Caco-2 (cell line): ENCODE measurements at regions of chr12 and their contacts with region 1.

Region 1: GRCh38 chr12:121748571-121749253 is 36.2 kb downstream of the TMEM120B start:
- DNase-seq: peak; percentile 83 to 92
- H3K4me3 ChIP-seq: no peak overlapping the region
- H3K4me3 Mint-ChIP-seq: peak overlapping the region; percentile 65
- H3K27ac Mint-ChIP-seq: peak overlapping the region; percentile 95
- H3K4me1 ChIP-seq: peaks cover 15% of the 10 kb centered on the region
- H3K4me1 Mint-ChIP-seq: peaks cover 10% of the 10 kb centered on the region
- H3K27me3 ChIP-seq: no peaks in the 10 kb centered on the region
- H3K27me3 Mint-ChIP-seq: no peaks in the 10 kb centered on the region
- CTCF ChIP-seq: no peak

Region 2: DNA sequence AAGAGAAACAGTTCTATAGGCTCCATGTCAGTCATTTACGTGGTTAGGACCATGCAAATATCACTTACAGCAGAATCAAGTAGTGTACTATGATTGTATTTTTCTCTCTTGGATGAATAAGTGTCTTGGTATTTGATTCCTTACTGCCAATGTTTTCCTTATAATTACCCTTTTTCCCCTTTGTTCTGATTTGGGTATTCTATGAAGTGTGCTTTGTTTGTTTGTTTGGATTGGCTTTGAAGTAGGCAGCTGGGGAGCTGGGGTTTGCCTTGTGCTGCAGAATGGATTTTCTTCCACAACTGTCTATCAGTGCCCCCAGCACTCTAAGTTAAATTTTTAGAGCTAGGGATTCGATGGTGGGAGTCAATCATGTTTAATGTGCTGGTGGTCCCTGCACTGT is 23.8 kb before region 1 on chr12:
- CTCF ChIA-PET with region 1: interaction called, 3 read pairs
- POLR2A ChIA-PET with region 1: no interaction called
- intact Hi-C with region 1: loop called (anchors 1 kb)
- DNase-seq: no peak
- H3K4me3 ChIP-seq: no peak overlapping the region
- H3K4me3 Mint-ChIP-seq: no peak overlapping the region
- H3K27ac Mint-ChIP-seq: no peak overlapping the region
- H3K4me1 ChIP-seq: no peaks in the 10 kb centered on the region
- H3K4me1 Mint-ChIP-seq: no peaks in the 10 kb centered on the region
- H3K27me3 ChIP-seq: no peaks in the 10 kb centered on the region
- H3K27me3 Mint-ChIP-seq: no peaks in the 10 kb centered on the region
- CTCF ChIP-seq: no peak

Region 3: DNA sequence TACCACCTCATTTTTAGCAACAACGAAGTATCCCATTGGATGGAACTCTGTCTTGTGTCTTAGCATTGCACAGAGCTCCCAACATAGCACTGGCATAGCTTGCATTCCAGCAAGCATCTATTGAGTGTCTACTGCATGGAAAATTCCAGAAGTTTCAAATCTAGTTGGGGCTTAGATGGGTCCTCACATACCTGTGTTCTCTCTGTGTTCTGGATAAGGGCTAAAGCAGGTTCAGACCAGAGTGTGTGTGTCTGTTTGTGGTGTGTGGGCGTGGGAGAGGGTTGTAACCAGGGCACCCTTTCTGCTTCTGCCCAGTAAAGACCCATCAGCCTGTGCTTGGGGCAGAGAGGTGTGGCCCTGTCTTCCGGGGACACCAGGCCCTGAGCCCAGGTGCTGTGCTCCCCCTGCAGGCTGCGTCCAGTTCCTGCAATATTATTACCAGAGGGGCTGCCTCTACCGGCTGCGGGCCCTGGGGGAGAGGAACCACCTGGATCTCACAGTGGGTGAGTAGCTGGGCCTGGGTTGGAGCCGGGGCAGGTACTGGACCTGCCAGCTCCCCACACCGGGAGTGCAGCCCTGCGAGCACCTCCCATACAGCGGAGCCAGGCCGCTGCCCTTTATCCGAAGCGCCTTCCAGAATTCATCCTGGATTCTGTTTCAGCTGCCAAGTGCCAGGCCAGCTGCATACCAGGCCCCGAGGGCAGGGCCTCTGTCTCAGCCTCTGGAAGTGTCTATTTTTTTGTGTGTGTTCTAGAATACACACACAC is 24.5 kb after region 1 on chr12:
- CTCF ChIA-PET with region 1: interaction called, 6 read pairs
- POLR2A ChIA-PET with region 1: no interaction called
- intact Hi-C with region 1: loop called (anchors 1 kb)
- DNase-seq: peak; percentile 81 to 86
- H3K4me3 ChIP-seq: no peak overlapping the region
- H3K4me3 Mint-ChIP-seq: no peak overlapping the region
- H3K27ac Mint-ChIP-seq: peak overlapping the region; percentile 25
- H3K4me1 ChIP-seq: peaks cover 20% of the 10 kb centered on the region
- H3K4me1 Mint-ChIP-seq: peaks cover 11% of the 10 kb centered on the region
- H3K27me3 ChIP-seq: no peaks in the 10 kb centered on the region
- H3K27me3 Mint-ChIP-seq: no peaks in the 10 kb centered on the region
- CTCF ChIP-seq: peak; percentile 89 to 90

Region 4: DNA sequence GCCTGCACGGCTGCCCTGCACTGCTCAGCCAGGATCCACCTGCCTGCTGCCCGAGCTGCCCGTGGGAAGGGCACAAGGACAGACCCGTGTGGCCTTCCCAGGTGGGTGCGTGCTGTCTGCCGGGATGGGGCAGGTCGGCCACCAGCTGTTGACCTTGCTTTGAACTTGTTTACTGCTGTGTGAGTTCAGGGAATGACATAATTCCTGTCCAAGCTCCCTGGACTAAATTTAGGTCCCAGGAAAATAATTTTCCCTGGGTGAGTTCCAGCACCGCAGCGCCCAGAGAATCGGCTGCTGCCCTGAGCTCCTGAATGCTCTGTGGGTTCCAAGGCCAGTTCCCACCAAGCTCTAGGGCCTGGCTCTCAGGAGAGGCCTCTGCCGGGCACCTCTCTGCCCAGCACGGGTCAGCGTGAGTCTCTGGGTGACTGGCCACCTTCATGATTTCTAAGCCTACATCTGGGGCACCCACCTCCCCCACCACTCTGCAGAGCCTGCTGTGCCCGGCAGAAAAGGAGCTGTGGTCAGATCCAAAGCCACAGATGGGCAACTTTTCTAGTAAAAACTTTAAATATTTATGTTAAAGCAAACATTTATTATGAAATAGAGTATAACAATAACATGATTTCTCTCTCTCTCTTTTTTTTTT is 302.6 kb after region 1 on chr12:
- CTCF ChIA-PET with region 1: no interaction called
- POLR2A ChIA-PET with region 1: no interaction called
- intact Hi-C with region 1: no loop called
- DNase-seq: no peak
- H3K4me3 ChIP-seq: no peak overlapping the region
- H3K4me3 Mint-ChIP-seq: no peak overlapping the region
- H3K27ac Mint-ChIP-seq: no peak overlapping the region
- H3K4me1 ChIP-seq: peaks cover 12% of the 10 kb centered on the region
- H3K4me1 Mint-ChIP-seq: peaks cover 6% of the 10 kb centered on the region
- H3K27me3 ChIP-seq: no peaks in the 10 kb centered on the region
- H3K27me3 Mint-ChIP-seq: no peaks in the 10 kb centered on the region
- CTCF ChIP-seq: no peak

Region 5: DNA sequence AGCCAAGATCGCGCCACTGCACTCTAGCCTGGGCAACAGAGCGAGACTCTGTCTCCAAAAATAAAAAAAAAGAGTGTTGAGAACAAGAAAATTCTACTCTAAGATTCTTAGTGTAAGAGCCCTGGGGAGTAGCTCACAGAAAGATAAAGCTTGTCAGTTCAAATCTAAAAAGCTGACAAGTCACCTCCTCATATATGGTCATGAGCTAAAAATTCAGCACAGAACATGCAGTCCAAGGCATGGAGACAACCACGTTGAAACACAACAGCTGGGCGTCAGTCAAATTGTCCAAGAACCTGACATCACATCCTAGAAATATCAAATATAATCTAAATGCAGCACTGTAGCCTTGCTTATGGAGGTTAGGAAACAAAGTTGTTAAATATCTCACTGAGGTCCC is 626.0 kb after region 1 on chr12:
- CTCF ChIA-PET with region 1: no interaction called
- POLR2A ChIA-PET with region 1: no interaction called
- intact Hi-C with region 1: no loop called
- DNase-seq: no peak
- H3K4me3 ChIP-seq: no peak overlapping the region
- H3K4me3 Mint-ChIP-seq: no peak overlapping the region
- H3K27ac Mint-ChIP-seq: no peak overlapping the region
- H3K4me1 ChIP-seq: peaks cover under 1% of the 10 kb centered on the region
- H3K4me1 Mint-ChIP-seq: peaks cover under 1% of the 10 kb centered on the region
- H3K27me3 ChIP-seq: no peaks in the 10 kb centered on the region
- H3K27me3 Mint-ChIP-seq: no peaks in the 10 kb centered on the region
- CTCF ChIP-seq: no peak